Activated CD4-positive, alpha-beta T cell treated with anti-CD3 and anti-CD28 coated beads for 36 hours (primary cell): ENCODE measurements at regions of chr1 and their contacts with region 1.

Region 1: GRCh38 chr1:37931361-37932158 is 15.3 kb downstream of the INPP5B start:
- DNase-seq: peak; percentile 98
- ATAC-seq: peak; percentile 98
- H3K4me3 Mint-ChIP-seq: peak overlapping the region; percentile 86
- H3K27ac Mint-ChIP-seq: peak overlapping the region; percentile 80
- H3K4me1 Mint-ChIP-seq: peaks cover 33% of the 10 kb centered on the region
- H3K27me3 Mint-ChIP-seq: no peaks in the 10 kb centered on the region

Region 2: DNA sequence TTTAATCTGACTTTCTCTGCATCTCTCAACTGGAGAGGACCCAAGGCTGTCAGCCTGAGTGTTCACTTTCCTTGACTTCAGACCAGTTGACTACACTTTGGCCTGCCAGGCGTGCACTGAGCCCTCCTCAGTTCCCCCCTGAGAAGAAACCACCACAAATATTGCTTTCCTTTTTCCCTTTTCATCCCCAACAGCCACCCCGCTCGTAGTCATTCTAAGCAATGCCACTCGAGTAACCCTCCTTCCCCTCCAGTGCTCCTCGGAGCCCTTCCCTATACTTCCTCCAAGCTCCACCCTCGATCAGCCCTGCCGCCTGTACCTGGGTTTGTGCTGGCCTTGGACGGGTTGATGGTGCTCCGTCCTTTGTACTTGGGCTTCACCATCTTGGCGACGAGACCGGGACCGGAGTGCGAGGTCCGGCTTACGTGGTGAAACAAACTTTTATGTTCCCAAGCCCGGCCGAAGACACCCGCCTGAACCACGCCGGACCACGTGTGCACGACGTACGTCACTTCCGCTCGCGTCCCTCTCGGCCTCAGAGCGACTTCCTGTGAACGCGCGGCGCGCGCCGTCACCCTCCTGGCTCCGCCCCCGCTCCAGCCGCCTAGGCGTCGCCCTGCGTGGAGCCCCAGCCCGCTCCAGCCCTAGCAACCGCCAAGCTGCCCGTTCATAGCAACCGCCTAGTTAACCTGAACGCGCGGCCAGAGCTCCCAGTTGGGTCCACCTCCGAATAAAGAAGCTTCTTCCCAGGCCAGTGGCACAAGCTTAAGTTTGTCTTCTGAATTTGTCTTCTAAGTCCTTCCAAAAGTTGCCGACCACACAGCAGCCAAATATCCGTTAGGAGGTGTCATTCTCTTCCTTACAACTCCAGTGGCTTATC is 335.9 kb before region 1 on chr1 and contains the start of gene GNL2:
- CTCF ChIA-PET with region 1: interaction called, 3 read pairs
- POLR2A ChIA-PET with region 1: no interaction called
- intact Hi-C with region 1: loop called in 1 of 2 experiments (anchors 1 kb)
- DNase-seq: peak; percentile 99
- ATAC-seq: peak; percentile 98
- H3K4me3 Mint-ChIP-seq: peak within 1 kb of the TSS; percentile 98
- H3K27ac Mint-ChIP-seq: peak within 1 kb of the TSS; percentile 92
- H3K4me1 Mint-ChIP-seq: peaks cover 37% of the 10 kb centered on the region
- H3K27me3 Mint-ChIP-seq: no peaks in the 10 kb centered on the region
- total RNA-seq, gene GNL2: 82.3 to 98.8 TPM

Region 3: GRCh38 chr1:37859507-37860345 is 71.8 kb before region 1 on chr1 and contains the start of gene MTF1:
- CTCF ChIA-PET with region 1: interaction called, 3 read pairs
- POLR2A ChIA-PET with region 1: interaction called, 3 read pairs
- intact Hi-C with region 1: loop called in 1 of 2 experiments (anchors 1 kb)
- DNase-seq: peak; percentile 98
- ATAC-seq: peak; percentile 98
- H3K4me3 Mint-ChIP-seq: peak within 1 kb of the TSS; percentile 87
- H3K27ac Mint-ChIP-seq: peak within 1 kb of the TSS; percentile 93
- H3K4me1 Mint-ChIP-seq: peaks cover 40% of the 10 kb centered on the region
- H3K27me3 Mint-ChIP-seq: no peaks in the 10 kb centered on the region
- total RNA-seq, gene MTF1: 16.1 to 23.8 TPM

Region 4: DNA sequence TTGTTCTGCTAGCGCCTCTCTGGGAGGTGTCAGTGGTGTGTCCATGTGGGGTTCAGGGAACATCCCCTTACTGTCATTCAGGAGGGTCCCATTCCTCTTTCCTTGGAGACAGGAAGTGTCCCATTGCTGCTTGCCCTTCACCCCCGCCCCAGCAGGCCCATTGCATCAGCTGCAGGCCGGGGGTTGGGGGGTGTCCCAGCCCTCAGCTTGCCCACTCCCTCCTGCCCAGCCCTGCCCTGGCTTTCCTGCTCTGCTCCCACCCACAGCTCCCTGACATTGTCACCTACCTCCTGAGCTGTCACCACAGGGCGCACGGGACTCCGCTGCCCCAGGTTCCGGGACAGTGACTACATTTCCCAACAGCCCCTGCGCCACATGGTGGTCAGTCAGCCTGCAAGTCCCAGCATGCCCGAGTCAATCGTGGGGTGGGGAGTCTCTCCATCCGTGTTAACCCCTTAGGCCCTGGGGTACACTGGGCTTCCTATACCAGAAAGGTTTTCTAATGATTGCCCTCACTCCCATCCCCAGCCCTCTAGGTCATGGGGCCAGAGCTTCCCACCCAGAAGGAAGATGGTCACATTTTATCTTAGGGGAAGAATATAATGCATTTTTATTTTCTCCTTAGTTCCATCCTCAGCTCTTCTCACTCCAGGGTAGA is 15.3 kb after region 1 on chr1 and contains the start of gene INPP5B:
- CTCF ChIA-PET with region 1: interaction called, 7 read pairs
- POLR2A ChIA-PET with region 1: no interaction called
- intact Hi-C with region 1: loop called in 1 of 2 experiments (anchors 1 kb)
- DNase-seq: peak; percentile 89
- ATAC-seq: peak; percentile 97
- H3K4me3 Mint-ChIP-seq: peak within 1 kb of the TSS; percentile 87
- H3K27ac Mint-ChIP-seq: peak within 1 kb of the TSS; percentile 98
- H3K4me1 Mint-ChIP-seq: peaks cover 17% of the 10 kb centered on the region
- H3K27me3 Mint-ChIP-seq: no peaks in the 10 kb centered on the region
- total RNA-seq, gene INPP5B: 27.7 to 28.9 TPM

Region 5: DNA sequence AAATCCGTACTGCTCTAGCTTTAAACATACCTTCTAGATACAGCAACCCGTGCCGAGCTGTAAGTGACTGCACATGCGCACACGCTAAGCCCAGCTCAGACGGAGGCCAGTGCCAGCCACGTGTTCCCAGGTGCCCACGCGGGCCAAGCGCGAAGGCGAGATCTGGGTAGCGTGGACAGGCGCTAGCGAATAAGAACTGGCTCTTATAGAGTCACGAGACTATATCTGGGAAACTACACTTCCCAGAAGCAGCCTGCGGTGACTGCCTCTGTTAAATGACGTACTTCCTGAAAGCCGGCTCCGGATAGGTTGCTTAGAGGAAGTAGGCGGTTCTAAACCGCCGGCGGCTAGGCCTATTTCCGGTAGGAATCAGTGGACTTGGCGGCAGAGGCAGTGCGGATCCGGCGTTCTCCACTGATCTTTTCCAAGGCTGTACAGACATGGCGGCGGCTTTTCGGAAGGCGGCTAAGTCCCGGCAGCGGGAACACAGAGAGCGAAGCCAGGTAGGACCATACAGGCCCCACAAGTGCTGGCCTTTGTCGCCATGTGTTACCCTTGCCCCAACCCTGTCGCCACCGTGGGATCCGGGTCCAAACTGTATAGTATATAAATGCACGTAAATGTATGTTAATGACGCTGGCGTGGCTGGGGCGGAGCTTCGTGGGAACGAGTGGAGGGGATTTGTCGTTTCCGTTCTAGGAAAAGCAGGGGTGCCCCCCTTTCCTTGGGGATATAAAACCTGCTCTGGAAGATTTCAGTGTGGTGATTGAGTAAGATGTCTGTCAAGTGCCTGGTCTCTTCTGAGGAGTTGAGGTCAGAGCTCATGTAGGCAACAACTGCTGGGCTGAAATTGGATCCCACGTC is 81.0 kb after region 1 on chr1 and contains the start of gene UTP11:
- CTCF ChIA-PET with region 1: interaction called, 3 read pairs
- POLR2A ChIA-PET with region 1: interaction called, 8 read pairs
- intact Hi-C with region 1: loop called in 1 of 2 experiments (anchors 1 kb)
- DNase-seq: peak; percentile 94
- ATAC-seq: peak; percentile 81
- H3K4me3 Mint-ChIP-seq: peak within 1 kb of the TSS; percentile 97
- H3K27ac Mint-ChIP-seq: peak within 1 kb of the TSS; percentile 95
- H3K4me1 Mint-ChIP-seq: peaks cover 51% of the 10 kb centered on the region
- H3K27me3 Mint-ChIP-seq: no peaks in the 10 kb centered on the region
- total RNA-seq, gene UTP11: 68.9 to 82.4 TPM

Region 6: DNA sequence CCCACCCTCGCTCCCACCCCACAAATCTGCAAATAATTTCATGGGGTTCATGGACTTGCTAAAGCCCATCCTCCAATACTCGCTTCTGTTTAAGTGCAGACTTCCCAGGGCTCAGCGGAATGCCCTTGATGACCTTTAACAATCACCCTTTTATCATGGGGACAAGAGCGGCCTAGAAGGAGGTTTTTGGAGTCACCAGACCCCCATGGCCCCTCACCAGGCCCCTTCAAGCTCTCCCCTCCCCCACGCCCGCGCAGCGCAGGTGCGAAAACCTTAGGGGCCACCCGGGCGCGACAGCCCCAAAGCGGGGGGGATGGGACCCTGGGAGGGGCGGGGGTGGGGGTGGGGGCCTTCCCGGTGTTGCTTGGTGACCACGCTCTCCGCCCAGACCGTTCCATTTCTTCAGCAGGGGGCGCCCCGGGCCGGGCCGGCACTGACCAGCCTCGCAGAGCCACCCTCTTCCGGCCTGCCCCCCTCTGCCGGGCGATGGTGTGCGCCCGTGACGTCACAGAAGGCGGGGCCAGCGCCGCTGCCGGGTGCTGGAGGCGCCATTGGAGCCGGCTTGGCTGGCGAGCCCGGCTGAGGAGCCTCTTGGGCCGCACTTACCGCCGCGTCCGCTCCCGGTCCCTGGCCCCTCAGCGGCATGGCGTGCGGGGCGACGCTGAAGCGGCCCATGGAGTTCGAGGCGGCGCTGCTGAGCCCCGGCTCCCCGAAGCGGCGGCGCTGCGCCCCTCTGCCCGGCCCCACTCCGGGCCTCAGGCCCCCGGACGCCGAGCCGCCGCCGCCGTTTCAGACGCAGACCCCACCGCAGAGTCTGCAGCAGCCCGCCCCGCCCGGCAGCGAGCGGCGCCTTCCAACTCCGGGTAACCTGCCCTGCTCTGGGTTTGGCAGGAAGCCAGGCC is 1059.4 kb after region 1 on chr1 and contains the start of gene AKIRIN1:
- CTCF ChIA-PET with region 1: no interaction called
- POLR2A ChIA-PET with region 1: no interaction called
- intact Hi-C with region 1: loop called in 1 of 2 experiments (anchors 5 kb)
- DNase-seq: peak; percentile 98
- ATAC-seq: peak; percentile 91
- H3K4me3 Mint-ChIP-seq: peak within 1 kb of the TSS; percentile 87
- H3K27ac Mint-ChIP-seq: peak within 1 kb of the TSS; percentile 88
- H3K4me1 Mint-ChIP-seq: peaks cover 55% of the 10 kb centered on the region
- H3K27me3 Mint-ChIP-seq: no peaks in the 10 kb centered on the region
- total RNA-seq, gene AKIRIN1: 65.7 to 86.0 TPM